Psoas muscle (tissue), 8 donors: ENCODE measurements at regions of chr5 and their contacts with region 1.

Region 1: GRCh38 chr5:173204185-173204979 is 30.6 kb downstream of the NKX2-5 start:
- DNase-seq: no peak
- ATAC-seq: no peak
- H3K4me3 ChIP-seq: no peak overlapping the region
- H3K27ac ChIP-seq: no peak overlapping the region
- H3K4me1 ChIP-seq: no peaks in the 10 kb centered on the region
- H3K27me3 ChIP-seq: peaks cover 0 to 42% (median 6%) of the 10 kb centered on the region in 3 donors
- CTCF ChIP-seq: peak; percentile 32

Region 2: DNA sequence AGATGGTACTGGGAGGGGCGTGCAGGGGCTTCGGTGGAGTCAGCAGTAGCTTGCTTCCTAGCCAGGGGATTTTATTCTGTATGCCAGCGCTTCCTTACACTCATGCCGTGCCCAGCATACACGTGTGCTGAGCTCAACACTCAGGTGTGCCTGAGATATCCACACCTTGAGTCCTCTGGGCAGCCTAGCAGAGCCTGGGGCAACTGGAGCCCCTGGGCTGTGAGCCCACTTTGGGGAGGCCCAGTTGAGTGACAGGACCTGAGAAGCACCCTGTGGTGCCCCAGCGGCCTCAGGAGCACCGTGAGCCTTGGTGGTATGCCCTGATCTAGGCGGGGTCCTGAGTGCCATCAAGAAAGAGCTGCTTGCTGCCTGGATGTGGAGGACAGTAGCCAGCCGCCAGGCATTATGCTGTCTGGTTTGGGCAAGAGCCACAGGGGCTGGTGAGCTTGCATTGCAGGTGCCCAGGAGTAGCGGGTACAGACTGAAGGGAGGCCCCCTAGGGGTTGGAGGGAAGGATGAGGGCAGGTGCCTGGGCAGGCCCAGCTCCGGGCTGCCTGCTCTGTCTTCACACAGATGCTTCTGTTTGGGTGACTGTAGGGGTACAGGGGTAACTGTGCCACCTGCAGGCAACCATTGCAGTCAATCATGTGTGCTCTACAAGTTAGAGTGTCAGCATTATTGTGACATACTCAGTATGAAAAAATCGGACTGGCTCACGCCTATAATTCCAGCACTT is 17.2 kb before region 1 on chr5:
- intact Hi-C with region 1: no loop called
- DNase-seq: no peak
- ATAC-seq: peak in 1 of 4 donors; percentile 30
- H3K4me3 ChIP-seq: no peak overlapping the region
- H3K27ac ChIP-seq: no peak overlapping the region
- H3K4me1 ChIP-seq: no peaks in the 10 kb centered on the region
- H3K27me3 ChIP-seq: no peaks in the 10 kb centered on the region
- CTCF ChIP-seq: no peak

Region 3: DNA sequence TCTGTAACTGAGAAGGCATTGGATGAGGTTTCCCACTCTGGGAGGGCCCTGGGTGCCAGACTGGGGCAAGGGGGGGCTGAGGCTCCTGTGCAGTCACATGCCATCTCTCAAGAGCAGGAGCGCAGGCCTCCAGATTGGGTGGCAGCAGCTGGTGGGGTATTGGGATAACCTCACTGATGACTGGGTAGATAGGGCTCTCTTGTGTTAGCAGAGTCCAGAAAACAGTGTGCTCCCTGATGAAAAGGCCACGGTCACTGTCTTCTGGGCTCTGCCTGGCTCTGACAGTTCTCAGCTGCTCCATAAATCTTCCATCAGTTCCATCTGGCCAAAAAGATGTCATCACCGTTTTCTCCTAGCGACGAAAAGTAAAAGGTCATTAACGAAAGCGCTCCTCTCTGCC is 52.4 kb after region 1 on chr5:
- intact Hi-C with region 1: loop called in 1 of 2 experiments (anchors 2 kb)
- DNase-seq: no peak
- ATAC-seq: peak; percentile 71 to 91 (median 79)
- H3K4me3 ChIP-seq: no peak overlapping the region
- H3K27ac ChIP-seq: no peak overlapping the region
- H3K4me1 ChIP-seq: peaks cover 9% of the 10 kb centered on the region
- H3K27me3 ChIP-seq: peaks cover 0 to 8% (median 1%) of the 10 kb centered on the region in 3 donors
- CTCF ChIP-seq: no peak

Region 4: GRCh38 chr5:173697931-173698579 is 493.7 kb after region 1 on chr5:
- intact Hi-C with region 1: no loop called
- DNase-seq: no peak
- ATAC-seq: no peak
- H3K4me3 ChIP-seq: no peak overlapping the region
- H3K27ac ChIP-seq: no peak overlapping the region
- H3K4me1 ChIP-seq: no peaks in the 10 kb centered on the region
- H3K27me3 ChIP-seq: no peaks in the 10 kb centered on the region
- CTCF ChIP-seq: no peak